ENCODE measurements at regions of chr14 and their contacts with region 1.

Region 1: DNA sequence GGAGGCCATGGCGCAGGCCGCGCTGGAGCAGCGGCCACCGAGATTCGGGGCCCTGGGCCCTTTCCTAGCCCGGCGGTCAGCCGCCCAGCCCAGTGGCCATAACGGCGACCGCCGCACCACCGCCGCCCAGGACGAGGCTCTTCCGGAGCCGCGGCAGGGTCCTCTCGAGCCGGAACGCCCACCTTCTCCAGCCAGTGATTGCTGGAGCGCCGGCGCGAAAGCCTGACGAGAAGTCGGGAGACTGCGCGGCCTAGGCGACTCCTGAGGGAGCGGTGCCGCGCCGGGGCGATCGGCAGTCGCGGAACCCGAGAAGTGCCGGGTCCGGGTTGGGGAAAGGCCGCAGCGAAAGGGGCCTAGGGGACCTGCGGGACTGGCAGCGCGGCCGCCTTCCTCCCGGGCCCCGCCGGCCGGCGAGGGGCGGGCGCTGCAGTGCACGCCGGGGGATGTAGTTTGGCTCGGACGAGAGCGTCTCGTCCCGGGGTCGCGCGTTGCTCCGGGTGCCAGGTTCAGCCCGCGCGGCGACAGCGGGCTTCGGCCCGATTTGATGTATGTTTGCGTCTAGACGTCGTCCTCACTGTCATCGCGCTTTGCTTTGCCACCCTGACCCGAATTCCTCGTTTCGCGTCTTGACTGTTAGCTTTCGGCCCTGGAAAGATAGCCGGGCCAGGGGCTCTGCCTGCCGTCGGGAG is at the start of gene VTI1B:
- DNase-seq: peak; percentile 90
- ATAC-seq: peak; percentile 98
- total RNA-seq, gene VTI1B: 114 TPM

Region 2: DNA sequence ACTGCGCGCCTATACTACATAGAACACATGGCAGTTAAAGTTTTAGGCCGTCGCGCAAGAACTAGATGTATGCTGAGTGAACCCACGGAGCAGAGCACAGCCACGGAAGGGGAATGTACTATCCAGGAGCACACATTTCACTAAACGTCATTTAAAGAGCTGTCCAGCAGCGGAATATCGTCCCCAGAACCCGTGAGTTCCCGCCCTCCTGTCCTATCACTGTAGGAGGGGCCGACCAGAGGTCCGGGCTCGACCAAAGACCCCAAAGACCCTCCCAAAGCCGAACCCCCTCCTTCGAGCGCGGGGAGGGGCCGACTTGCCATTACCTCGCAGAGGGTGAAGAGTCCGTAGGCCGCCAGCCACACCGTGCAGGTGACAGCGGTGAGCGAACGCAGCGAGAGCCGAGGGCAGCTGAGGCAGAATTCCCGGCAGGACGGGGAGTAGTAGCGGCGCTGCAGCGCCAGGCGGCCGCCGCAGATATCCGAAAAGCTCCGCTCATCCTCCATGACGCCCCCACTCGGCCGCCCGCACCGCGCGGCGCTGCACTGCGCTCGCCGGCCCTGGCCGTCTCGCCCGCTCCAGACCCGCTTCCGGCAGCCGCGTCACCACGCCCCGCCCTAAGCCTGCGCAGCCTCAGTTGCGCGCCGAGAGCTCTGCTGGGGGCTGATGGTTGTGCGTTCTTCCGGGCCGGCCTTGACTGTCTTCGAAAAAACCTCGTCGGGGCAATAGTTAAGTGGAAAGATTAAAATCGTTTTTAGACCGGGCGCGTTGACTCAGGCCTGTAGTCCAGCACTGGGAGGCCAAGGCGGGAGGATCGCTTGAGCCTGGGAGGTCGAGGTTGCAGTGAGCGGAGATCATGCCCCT is 74.7 kb before region 1 on chr14 and contains the start of gene PIGH:
- intact Hi-C with region 1: loop called (anchors 5 kb)
- DNase-seq: peak; percentile 96
- ATAC-seq: peak; percentile 100
- total RNA-seq, gene PIGH: 11.8 TPM

Region 3: DNA sequence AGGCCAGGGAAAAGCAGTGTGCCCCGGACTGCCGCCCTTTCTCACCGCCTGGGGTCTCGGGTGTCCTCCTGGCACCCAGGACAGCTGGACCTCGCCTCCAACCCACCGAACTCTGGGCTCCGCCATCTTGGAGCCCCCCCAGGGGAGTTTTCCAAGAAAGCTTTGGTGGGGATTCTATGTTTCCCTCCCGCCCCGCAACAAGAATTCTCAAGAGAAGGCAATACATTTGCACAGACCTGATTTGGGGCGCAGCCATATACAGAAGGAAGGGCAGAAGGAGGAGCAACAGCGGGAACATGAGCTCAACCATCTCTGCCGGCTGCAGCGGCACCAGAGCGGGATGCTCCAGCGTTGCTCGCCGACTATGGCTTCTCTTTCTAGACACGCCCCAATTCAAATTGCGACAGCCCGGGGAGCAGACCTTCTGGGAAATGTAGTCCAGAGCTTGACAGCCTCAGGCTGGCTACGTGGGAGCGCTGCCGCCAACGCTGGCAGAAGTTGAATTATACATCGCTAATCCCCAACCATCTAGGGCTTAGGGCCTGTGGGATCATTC is 20.8 kb after region 1 on chr14 and contains the start of gene RDH11:
- intact Hi-C with region 1: loop called (anchors 2 kb)
- DNase-seq: peak; percentile 90
- ATAC-seq: peak; percentile 98
- total RNA-seq, gene RDH11: 14.3 TPM

Region 4: DNA sequence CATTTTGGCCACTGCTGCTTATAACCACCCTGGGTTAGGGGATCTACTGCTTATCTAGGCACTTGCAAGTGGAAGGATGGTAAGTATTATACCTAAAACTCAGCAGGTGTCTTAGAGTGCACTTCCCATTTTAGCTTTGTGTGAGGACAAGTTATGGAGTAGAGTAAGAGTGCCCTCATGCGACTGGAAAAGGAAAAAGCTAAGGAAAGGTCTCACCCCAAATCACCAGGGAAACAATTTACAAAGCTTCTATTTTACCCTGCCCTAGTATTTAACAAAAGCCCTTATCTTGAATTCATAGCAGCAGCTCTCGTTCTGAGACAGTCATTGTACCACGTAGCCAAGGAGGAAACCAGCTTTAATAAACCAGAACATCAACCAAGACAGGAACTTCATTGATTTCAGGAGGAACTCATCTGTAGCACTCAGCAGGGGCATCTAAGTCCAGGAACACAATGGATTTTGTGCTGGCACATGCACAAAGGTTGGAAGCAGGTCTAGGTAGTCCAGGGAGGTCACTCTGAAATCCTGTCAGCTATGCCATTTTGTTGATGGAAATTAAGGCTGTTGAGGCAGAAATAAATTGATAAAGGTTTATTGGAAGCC is 30.0 kb after region 1 on chr14:
- intact Hi-C with region 1: loop called (anchors 5 kb)
- DNase-seq: no peak
- ATAC-seq: peak; percentile 54

Measured in Right ventricle myocardium inferior (tissue), 1 donor.